GM10248 (cell line): ENCODE measurements at regions of chr3 and their contacts with region 1.

Region 1: DNA sequence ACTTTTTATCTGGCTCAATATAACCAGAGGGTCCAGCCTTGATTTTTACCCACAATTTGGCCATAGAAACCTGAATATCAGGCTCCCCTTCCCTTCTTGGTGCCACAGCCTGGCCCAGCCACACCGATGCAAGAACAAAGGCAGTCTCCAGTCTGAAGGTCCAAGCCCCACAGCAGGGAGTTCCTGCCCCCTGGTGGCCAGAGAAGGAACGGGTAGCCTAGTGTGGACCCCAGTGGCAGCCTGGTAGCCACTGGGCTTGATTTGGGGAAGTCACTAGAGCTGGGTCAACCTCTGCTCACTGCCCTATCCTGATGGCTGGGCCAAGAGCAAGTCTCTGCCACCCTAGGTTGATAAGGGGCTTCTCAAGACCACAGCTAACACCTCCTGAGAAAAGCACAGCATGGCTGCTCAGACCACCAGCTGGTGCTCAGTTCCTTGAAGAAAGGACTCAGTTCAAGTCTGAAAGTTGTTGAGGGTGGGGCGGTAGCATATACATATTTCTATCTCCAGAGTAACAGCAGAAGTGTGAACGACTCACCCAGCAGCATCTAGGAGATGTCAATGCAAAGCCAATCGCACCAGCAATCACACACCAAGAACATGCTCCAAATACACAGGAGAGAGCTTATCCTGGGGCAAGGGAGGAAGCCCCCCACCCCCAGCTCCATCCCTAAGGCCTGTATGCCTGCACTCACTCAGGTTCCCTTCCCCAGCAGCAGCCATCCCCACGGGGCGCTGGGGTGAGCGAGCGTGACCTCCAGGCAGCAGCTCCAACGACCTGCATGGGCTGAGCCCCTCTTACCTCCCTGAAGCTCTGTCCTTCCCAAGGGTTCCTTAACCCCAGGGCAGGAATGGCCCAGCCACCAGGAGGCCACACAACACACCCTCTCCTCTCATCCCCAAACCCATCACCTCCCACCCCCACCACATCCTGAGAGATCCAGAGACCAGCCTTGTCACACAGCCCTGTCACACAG is 7.6 kb downstream of the PFKFB4 start:
- DNase-seq: peak; percentile 79
- CTCF ChIP-seq: peak; percentile 83

Region 2: DNA sequence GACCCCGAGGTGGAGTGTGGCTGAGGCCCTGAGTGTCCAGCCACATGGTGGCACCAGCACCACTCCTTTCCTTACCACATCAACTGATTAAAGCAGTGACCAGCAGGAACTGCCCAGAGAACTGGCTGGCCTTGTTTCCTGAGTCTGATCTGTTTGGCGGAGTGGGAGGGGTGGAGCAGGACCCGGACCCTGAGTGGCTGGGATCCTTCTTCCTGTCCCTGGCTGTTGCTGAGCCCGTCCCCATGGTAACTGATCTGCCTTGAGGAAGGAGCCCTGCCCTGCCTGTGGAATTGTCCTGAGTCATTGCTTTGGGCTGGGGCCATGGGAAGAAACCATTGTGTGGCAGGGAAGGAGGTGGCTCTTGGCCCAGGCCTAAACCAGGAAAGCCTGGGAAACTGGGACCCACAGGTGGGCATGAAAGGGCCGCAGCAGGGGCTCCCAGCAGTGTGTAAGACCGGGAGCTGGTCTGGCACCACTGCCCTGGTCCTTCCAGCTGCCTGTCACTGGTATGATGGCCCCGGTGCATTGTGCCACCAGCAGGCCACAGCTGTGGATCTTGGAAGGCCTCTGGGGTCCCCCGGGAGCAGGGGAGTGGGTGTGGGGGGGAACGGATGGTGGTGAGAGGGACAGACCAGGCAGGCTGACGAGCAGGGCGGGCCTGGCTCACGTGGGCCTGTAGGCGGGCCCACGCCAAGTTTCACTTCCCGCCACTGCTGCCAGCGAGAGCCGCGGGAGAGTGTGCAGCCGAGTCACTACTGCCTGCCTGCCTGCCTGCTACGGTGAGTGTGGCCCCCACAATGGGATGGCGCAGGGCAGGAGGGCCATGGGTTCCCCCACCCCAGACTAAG is 83.3 kb before region 1 on chr3:
- CTCF ChIA-PET with region 1: interaction called, 13 read pairs
- POLR2A ChIA-PET with region 1: no interaction called
- DNase-seq: peak; percentile 92
- CTCF ChIP-seq: peak; percentile 53

Region 3: DNA sequence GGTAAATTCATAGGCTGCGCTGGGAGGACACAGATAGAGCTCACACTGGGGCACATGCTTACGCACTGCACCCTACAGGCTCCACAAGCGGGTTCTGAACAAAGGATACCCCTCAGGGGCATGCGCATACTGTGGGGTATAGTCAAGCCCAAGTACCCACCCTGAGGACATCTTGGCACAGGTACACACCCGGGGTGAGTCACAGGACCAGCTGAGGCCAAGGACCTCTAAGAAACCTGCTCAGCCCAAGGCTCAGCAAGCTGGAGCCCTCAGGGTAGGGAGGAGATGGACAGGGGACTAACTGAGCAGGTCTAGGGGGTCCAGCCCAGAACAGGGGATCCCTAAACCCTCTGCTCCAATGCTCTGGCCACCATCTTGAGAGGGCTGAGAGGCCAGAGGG is 48.4 kb before region 1 on chr3:
- CTCF ChIA-PET with region 1: no interaction called
- POLR2A ChIA-PET with region 1: no interaction called
- DNase-seq: no peak
- CTCF ChIP-seq: no peak

Region 4: DNA sequence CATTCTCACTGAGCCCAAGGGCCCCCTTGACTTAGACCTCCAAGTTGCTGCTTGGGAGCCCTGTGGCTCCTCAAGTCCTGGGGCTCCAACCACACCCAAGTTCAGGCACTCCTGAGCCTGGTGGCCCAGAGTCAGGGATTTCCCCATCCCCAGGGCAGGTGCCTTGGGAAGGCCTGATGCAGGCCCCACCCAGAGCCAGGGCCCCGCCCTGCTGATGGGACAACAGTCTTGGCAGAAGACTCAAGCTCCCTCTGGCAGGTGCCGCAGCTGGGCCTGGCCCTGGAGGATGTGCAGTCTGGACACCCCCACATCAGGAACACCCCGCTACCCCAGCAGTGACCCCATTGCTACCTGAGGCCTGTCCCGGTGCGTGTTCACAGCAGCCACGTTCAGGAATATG is 27.4 kb before region 1 on chr3:
- CTCF ChIA-PET with region 1: interaction called, 13 read pairs
- POLR2A ChIA-PET with region 1: no interaction called
- DNase-seq: no peak
- CTCF ChIP-seq: no peak

Region 5: DNA sequence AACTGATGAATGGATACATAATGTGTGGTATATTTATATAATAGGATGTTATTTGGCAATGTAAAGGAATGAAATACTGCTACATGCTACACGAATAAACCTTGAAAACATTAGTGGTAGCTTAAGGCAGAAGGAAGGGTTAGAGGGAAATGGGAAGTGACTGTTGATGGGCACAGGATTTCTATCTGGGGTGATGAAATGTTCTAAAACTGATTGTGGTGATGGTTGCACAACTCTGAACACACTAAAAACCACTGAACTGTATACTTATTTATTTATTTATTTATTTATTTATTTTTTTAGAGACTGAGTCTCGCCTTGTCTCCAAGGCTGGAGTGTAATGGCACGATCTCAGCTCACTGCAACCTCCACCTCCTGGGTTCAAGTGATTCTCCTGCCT is 20.3 kb before region 1 on chr3:
- CTCF ChIA-PET with region 1: interaction called, 13 read pairs
- POLR2A ChIA-PET with region 1: no interaction called
- DNase-seq: no peak
- CTCF ChIP-seq: no peak

Region 6: DNA sequence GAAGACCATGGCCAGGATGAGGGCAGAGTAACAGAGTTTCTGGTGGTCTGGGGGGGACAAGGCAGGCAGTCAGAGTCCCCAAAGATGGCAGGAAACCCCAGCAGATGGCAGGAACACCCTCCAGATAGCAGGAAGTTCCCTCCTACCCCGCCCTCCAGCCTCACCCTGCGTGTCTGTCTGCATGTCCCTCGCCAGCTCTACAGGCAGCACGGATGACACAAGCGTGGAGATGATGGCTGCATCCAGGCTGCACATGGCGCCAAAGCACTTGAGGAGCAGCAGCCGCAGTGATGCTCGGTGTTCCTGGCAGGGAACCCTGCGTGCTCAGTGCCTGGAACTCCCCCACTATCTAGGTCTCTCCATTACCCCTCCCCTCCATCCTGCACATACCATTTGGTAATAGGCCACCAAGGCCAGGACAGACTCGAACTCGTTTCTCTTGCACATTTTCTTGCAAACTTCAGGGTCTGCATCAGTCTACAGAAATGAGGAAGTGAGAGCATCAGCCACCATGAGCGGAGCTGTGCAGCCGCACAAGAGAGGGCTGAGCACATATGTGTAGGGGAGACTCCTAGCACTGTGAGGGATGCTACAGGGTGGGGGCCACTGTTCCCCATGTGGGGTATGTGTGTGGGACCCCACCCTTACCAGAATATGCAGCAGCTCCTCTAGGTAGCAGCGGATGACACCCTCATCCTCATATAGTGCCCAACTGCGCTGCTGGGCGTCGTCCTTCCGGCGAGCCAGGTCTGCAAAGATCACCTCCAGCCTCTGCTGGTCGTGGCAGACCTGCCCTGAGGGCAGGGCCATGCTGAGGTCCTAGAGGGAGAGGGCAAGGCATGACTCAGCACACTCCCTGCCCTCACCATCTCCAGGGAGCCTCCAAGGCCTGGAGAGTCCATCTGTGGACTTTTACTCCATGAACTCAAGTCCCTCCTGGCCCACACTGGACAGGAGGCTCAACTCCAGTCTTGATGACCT is 130.7 kb after region 1 on chr3:
- CTCF ChIA-PET with region 1: no interaction called
- POLR2A ChIA-PET with region 1: no interaction called
- DNase-seq: peak; percentile 46
- CTCF ChIP-seq: no peak